Sciatic nerve (tissue), 2 donors: ENCODE measurements at regions of chr11 and their contacts with region 1.

Region 1: GRCh38 chr11:56453521-56453920 is 19.6 kb downstream of the OR5M3 start:
- DNase-seq: no peak
- ATAC-seq: no peak

Region 2: DNA sequence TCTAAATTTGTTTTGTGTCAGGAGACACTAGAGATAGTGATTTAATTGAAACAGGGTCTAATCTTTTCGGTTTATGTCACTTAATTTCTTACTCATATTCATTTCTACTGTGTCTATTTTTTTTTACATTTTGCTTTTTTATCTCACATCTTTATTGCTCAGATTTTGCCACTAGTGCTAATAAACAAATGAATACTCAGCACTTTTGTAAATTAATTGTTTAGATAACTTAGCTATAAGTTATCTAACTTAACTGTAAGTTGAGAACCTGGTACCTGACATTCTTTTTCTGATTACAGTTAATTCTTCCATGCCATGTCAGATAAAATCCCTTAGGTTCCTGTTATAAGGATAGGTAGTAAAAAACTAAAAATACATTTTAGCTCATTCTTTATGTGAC is 59.8 kb after region 1 on chr11:
- intact Hi-C with region 1: loop called (anchors 10 kb)
- DNase-seq: no peak
- ATAC-seq: no peak

Region 3: GRCh38 chr11:56624661-56625110 is 171.2 kb after region 1 on chr11:
- intact Hi-C with region 1: no loop called
- DNase-seq: no peak
- ATAC-seq: no peak